ENCODE measurements at regions of chr1 and their contacts with region 1.

Region 1: GRCh38 chr1:114703242-114703641 is 7.9 kb upstream of the AMPD1 start:
- DNase-seq: no peak
- ATAC-seq: peak; percentile 90 to 93 (median 90)
- H3K4me3 ChIP-seq: peak overlapping the region; percentile 17
- H3K27ac ChIP-seq: peak overlapping the region; percentile 94
- H3K4me1 ChIP-seq: peaks cover 31% of the 10 kb centered on the region
- H3K27me3 ChIP-seq: no peaks in the 10 kb centered on the region
- CTCF ChIP-seq: no peak

Region 2: GRCh38 chr1:114716304-114717170 is 13.3 kb after region 1 on chr1 and contains the start of gene NRAS:
- intact Hi-C with region 1: loop called in 1 of 2 experiments (anchors 1 kb)
- DNase-seq: peak; percentile 95 to 96
- ATAC-seq: peak; percentile 93 to 95 (median 94)
- H3K4me3 ChIP-seq: peak within 1 kb of the TSS; percentile 66
- H3K27ac ChIP-seq: peak within 1 kb of the TSS; percentile 83
- H3K4me1 ChIP-seq: peaks cover 26% of the 10 kb centered on the region
- H3K27me3 ChIP-seq: no peaks in the 10 kb centered on the region
- CTCF ChIP-seq: no peak
- total RNA-seq, gene NRAS: 3.6 to 6.6 (median 5.9) TPM

Region 3: DNA sequence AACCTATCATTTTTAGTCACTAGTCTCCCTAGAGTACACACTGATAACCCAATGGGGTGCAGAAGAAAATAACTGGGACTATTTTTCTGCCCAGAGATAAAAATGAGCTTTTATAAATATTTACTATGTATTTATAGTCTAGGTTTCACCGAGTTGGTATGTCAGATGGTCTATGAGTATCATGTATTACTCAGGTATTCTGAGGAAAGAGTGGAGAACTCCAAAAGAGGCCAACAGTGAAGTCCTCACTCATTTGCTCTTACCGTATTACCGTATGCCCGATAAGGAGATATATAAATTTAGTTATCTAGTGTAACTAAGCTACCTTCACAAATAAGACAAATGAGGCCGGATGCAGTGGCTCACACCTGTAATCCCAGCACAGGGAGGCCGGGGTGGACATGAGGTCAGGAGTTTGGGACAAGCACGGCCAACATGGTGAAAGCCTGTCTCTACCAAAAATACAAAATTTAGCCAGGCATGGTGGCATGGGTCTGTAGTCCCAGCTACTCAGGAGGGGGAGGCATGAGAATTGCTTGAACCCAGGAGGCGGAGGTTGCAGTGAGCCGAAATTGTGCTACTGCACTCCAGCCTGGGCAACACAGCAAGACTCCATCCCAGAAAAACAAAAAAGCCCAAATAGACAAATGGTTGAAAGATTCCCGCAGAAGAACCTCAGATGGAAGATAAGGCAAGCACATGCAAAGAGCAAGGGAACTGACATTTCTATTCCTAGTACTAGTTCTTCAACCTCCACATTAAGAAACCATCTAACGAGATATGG is 38.9 kb after region 1 on chr1:
- intact Hi-C with region 1: loop called in 1 of 2 experiments (anchors 5 kb)
- DNase-seq: no peak
- ATAC-seq: peak; percentile 49 to 70 (median 52)
- H3K4me3 ChIP-seq: peak overlapping the region; percentile 5
- H3K27ac ChIP-seq: peak overlapping the region; percentile 100
- H3K4me1 ChIP-seq: peaks cover 89% of the 10 kb centered on the region
- H3K27me3 ChIP-seq: no peaks in the 10 kb centered on the region
- CTCF ChIP-seq: no peak